Calu3 (cell line): ENCODE measurements at regions of chr1 and their contacts with region 1.

Region 1: DNA sequence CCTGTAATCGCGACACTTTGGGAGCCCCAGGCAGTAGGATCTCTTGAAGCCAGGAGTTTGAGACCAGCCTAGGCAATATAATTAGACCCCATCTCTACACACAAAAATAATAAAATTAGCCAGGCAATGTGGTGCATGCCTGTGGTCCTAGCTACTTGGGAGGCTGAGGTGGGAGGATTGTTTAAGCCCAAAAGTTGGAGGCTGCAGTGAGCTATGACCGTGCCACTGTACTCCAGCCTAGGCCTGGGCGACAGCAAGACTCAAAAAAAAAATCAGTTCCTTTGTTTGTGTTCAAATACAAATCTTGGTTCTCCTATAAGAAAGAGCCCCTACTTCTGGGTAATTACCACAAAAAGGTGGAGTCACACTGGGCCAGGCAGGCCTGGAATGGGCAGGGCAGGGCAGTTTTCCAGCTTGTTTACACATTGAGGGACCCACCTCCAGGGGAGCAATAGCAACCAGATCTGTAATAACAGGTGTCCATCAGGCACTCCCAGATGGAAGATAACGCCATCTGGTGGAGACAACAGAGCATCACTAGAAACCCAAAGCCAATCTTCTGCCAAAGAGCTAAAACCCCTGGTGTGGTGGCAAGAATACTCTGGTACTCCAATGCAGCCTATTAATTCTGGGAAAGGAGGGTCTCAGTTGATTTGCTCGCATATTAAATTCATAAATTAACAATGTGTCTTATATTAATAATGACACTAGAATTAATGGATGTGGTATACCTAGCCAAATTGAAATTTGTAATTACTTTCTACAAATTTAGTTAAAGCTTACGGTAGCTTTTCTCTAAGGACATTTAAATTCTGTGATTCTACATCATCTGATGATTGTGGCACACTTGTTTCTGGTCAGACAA is 13.2 kb downstream of the PPP1R15B start:
- DNase-seq: peak; percentile 92
- H3K4me3 Mint-ChIP-seq: no peak overlapping the region
- H3K27ac Mint-ChIP-seq: no peak overlapping the region
- H3K4me1 Mint-ChIP-seq: peaks cover 17% of the 10 kb centered on the region
- H3K27me3 Mint-ChIP-seq: no peaks in the 10 kb centered on the region
- CTCF ChIP-seq: peak; percentile 92

Region 2: DNA sequence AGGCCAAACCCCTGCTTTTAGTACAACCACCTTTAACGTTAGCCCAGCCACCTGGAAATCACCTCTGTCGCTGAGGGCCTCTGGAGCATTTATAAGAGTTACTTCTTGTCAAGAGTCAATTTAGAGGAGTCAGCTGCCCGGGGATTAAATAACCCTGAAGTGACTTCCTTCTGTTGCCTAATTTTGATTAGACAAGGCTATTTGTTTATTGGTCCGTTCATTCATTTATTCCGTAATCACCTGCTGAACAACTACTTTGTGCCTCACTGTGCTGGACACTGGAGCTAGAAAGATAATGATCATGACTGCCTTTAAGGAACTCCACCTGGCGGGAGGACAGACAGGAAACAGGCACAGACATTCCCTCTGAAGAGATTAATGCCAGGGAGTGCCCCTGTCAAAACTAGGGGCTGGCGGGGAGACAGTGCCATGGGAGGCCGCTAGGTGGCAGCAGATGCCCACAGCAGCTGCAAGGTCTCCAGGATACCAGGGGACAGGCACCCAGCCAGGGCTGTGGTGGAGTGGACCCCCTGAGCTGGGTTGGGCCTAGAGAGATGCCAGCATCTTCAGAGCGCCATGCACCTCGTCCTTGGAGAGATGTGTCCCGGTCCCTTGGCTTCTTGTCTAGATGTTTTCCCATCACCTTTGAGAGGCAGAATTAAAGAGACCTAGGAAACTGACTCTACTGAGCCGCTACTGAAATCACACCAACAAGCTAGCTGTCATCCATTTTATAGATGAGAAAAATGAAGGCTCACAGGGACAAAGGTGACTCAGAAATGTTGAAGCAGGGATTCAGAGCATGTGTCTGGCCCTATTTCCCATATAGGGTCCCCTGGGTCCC is 236.0 kb before region 1 on chr1:
- CTCF ChIA-PET with region 1: interaction called, 12 read pairs
- intact Hi-C with region 1: no loop called
- DNase-seq: peak; percentile 94
- H3K4me3 Mint-ChIP-seq: no peak overlapping the region
- H3K27ac Mint-ChIP-seq: no peak overlapping the region
- H3K4me1 Mint-ChIP-seq: no peaks in the 10 kb centered on the region
- H3K27me3 Mint-ChIP-seq: peaks cover 16% of the 10 kb centered on the region
- CTCF ChIP-seq: peak; percentile 99

Region 3: GRCh38 chr1:204363335-204364124 is 34.9 kb before region 1 on chr1:
- CTCF ChIA-PET with region 1: interaction called, 14 read pairs
- intact Hi-C with region 1: no loop called
- DNase-seq: peak; percentile 73
- H3K4me3 Mint-ChIP-seq: peak overlapping the region; percentile 44
- H3K27ac Mint-ChIP-seq: peak overlapping the region; percentile 8
- H3K4me1 Mint-ChIP-seq: peaks cover 34% of the 10 kb centered on the region
- H3K27me3 Mint-ChIP-seq: no peaks in the 10 kb centered on the region
- CTCF ChIP-seq: peak; percentile 98

Region 4: DNA sequence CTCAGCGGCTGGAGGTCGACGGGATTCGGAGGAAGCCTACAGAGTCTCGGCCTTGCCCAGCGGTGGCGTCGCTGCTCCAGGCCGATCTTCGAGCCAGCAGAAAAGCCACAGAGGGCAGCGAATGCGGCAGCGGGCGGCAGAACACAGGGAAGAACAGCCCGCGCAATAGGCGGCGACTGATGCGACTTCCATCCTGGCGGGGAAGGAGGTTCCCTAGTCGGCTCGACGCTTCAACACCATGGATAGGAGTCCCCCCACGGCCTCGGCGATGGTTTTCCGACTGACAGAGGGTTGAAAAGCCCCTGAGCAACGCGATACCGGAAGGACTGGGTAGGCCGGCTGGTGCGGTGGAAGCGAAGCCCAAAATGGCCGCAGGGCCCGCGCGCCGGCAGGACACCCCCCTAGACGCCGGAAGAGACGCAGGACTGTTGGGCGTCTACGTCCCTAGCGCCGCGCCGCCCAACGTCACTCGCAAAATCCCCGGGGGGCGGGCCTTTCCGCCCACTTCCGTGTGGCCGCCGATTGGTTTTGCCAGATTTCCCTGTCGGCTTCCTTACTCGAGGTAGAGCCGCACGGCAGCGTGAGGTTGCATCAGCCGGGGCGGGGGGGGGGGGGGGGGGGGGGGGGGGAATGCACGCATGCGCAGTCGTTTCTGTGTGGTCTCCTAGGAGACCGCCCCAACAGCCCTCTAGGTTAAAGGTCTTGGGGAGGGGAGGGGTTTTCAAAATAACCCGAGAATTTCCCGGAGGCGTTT is 13.2 kb after region 1 on chr1 and contains the start of gene PPP1R15B:
- CTCF ChIA-PET with region 1: interaction called, 30 read pairs
- intact Hi-C with region 1: no loop called
- DNase-seq: peak; percentile 99
- H3K4me3 Mint-ChIP-seq: peak within 1 kb of the TSS; percentile 96
- H3K27ac Mint-ChIP-seq: peak within 1 kb of the TSS; percentile 97
- H3K4me1 Mint-ChIP-seq: peaks cover 24% of the 10 kb centered on the region
- H3K27me3 Mint-ChIP-seq: no peaks in the 10 kb centered on the region
- CTCF ChIP-seq: no peak
- total RNA-seq, gene PPP1R15B: 65.2 and 68.8 TPM in 2 replicates

Region 5: GRCh38 chr1:204494281-204495077 is 96.0 kb after region 1 on chr1 and contains the start of gene PIK3C2B:
- CTCF ChIA-PET with region 1: interaction called, 14 read pairs
- intact Hi-C with region 1: no loop called
- DNase-seq: peak; percentile 92
- H3K4me3 Mint-ChIP-seq: peak within 1 kb of the TSS; percentile 84
- H3K27ac Mint-ChIP-seq: peak within 1 kb of the TSS; percentile 77
- H3K4me1 Mint-ChIP-seq: peaks cover 33% of the 10 kb centered on the region
- H3K27me3 Mint-ChIP-seq: peaks cover 8% of the 10 kb centered on the region
- CTCF ChIP-seq: peak; percentile 68
- total RNA-seq, gene PIK3C2B: 24.4 and 33.9 TPM in 2 replicates

Region 6: GRCh38 chr1:204516180-204516879 is 117.9 kb after region 1 on chr1 and contains the start of gene MDM4:
- CTCF ChIA-PET with region 1: interaction called, 18 read pairs
- intact Hi-C with region 1: no loop called
- DNase-seq: peak; percentile 95
- H3K4me3 Mint-ChIP-seq: no peak within 1 kb of the TSS
- H3K27ac Mint-ChIP-seq: no peak within 1 kb of the TSS
- H3K4me1 Mint-ChIP-seq: peaks cover 11% of the 10 kb centered on the region
- H3K27me3 Mint-ChIP-seq: no peaks in the 10 kb centered on the region
- CTCF ChIP-seq: no peak
- total RNA-seq, gene MDM4: 101 and 106 TPM in 2 replicates